SK-N-SH (cell line): ENCODE measurements at regions of chr1 and their contacts with region 1.

Region 1: DNA sequence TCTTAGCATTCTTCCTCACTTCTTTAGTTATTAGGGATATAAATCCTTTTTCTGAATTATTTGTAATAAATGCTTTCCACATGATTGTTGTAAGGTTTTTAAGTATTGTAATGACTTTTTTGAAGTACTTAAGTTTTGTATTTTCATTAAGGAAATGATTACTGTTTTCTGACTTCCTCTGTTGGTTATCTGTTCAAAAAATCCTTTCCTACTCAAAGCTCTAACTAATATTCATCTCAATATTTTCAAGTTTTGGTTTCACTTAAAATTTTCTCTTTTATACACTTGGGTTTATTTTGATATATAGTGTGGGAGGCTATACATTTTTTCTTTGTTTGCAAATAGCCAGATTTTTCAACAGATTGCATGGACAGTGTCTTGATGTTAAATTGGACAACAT is 59.9 kb upstream of the NHLH2 start:
- DNase-seq: no peak
- H3K4me3 ChIP-seq: no peak overlapping the region
- H3K27ac ChIP-seq: no peak overlapping the region
- H3K4me1 ChIP-seq: no peaks in the 10 kb centered on the region
- H3K27me3 ChIP-seq: no peaks in the 10 kb centered on the region; the same call in 1 of the 2 replicates
- CTCF ChIP-seq: no peak
- EP300 ChIP-seq: no peak
- RAD21 ChIP-seq: no peak

Region 2: DNA sequence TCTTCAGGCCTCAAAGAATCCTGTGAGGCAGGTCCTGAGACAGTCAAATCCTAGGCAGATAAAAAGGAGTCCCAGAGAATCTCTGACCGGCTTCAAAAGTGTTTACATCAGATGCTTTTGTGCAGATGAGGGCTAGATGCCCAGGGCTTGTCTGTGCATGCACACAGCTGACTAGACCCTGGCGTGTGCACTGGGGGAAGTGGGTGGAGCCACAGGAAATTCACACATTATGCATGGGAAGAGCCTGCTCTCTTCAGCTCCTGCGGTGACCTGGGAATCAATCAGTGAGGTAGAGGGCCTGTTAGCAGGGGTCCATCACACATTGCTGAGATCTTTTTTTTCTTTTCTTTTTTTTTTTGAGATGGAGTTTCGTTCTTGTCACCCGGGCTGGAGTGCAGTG is 23.3 kb before region 1 on chr1:
- CTCF ChIA-PET with region 1: no interaction called
- POLR2A ChIA-PET with region 1: no interaction called
- DNase-seq: no peak
- H3K4me3 ChIP-seq: no peak overlapping the region
- H3K27ac ChIP-seq: no peak overlapping the region
- H3K4me1 ChIP-seq: no peaks in the 10 kb centered on the region
- H3K27me3 ChIP-seq: no peaks in the 10 kb centered on the region
- CTCF ChIP-seq: no peak
- EP300 ChIP-seq: no peak
- RAD21 ChIP-seq: no peak

Region 3: DNA sequence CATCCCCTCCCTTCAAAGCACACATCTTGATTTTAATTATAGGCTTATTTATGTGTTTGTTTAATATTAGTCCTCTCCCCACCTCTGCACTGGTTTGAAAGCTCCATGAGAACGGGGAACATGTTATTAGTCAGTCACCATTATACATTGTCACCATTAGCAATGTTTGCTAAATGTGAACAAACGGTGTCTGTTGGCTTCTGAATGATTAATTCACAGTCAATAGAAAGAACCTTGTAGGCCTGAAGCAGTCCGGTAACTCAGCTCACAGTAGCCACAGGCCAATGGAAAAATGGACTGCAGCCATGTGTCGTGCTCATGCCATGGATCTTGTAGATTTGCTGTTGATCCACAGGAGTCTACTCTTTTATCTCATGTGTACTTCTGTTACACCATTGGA is 10.3 kb before region 1 on chr1:
- CTCF ChIA-PET with region 1: interaction called, 10 read pairs
- POLR2A ChIA-PET with region 1: no interaction called
- DNase-seq: no peak
- H3K4me3 ChIP-seq: no peak overlapping the region
- H3K27ac ChIP-seq: no peak overlapping the region
- H3K4me1 ChIP-seq: no peaks in the 10 kb centered on the region
- H3K27me3 ChIP-seq: no peaks in the 10 kb centered on the region
- CTCF ChIP-seq: no peak
- EP300 ChIP-seq: no peak
- RAD21 ChIP-seq: no peak

Region 4: DNA sequence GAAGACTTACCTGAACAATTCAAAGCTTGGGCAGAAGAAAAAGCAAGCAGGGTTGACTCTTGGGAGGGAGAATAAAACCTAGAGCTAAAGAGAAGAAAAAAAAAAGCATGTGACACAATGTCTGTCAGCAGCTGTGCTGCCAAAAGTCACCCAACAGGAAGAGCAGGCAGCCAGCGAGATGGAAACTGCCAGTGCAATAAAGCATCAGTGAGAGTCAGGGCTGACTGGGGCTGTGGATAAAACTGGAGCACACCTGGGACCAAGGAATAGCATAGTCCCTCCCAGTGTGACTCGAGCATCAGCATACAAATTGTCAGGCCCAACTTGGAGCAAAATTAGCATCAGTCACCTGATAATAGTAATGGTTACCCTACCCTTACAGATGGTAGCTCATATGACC is 10.5 kb after region 1 on chr1:
- CTCF ChIA-PET with region 1: no interaction called
- POLR2A ChIA-PET with region 1: no interaction called
- DNase-seq: no peak
- H3K4me3 ChIP-seq: no peak overlapping the region
- H3K27ac ChIP-seq: no peak overlapping the region
- H3K4me1 ChIP-seq: peaks cover 0 to 5% of the 10 kb centered on the region in 2 experiments; a peak in 2 of 4 replicates
- H3K27me3 ChIP-seq: no peaks in the 10 kb centered on the region
- CTCF ChIP-seq: no peak
- EP300 ChIP-seq: no peak
- RAD21 ChIP-seq: no peak